ENCODE measurements at regions of chr6 and their contacts with region 1.

Region 1: GRCh38 chr6:105593805-105594671 is 191.2 kb upstream of the PREP start:
- DNase-seq: no peak
- ATAC-seq: no peak
- H3K4me3 ChIP-seq: no peak overlapping the region
- H3K27ac ChIP-seq: peak overlapping the region; percentile 92
- H3K4me1 ChIP-seq: peaks cover 16% of the 10 kb centered on the region
- H3K27me3 ChIP-seq: no peaks in the 10 kb centered on the region
- CTCF ChIP-seq: no peak

Region 2: DNA sequence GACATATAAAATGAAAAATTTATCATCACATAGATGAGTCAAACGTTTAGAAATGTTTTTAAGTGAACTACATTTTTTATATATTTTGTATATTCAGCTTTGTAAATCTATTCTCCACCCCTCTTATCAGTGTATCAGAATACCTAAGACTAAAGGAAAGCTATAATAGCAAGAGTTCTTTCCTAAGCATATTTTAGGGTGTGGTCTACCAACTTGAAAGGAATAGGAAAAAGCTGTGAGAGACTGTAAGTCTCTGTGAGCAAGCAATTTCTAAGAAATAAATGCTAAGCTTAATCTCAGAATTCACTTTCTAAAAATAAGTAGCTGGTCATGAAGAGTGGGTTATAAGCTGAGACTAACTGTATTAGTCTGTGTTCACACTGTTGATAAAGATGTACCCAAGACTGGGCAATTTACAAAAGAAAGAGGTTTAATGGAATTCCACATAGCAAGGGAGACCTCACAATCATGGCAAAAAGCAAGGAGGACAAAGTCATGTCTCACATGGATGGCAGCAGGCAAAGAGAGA is 15.8 kb before region 1 on chr6:
- CTCF ChIA-PET with region 1: interaction called, 10 read pairs
- POLR2A ChIA-PET with region 1: no interaction called
- in situ Hi-C with region 1: no loop called
- intact Hi-C with region 1: no loop called
- DNase-seq: no peak
- ATAC-seq: no peak
- H3K4me3 ChIP-seq: no peak overlapping the region
- H3K27ac ChIP-seq: no peak overlapping the region
- H3K4me1 ChIP-seq: no peaks in the 10 kb centered on the region
- H3K27me3 ChIP-seq: no peaks in the 10 kb centered on the region
- CTCF ChIP-seq: no peak